Activated CD8-positive, alpha-beta memory T cell treated with anti-CD3 and anti-CD28 coated beads, Interleukin-2, amount 10 ng/mL, durations not matched to agents 7 days and 5 days (primary cell): ENCODE measurements at regions of chr1 and their contacts with region 1.

Region 1: DNA sequence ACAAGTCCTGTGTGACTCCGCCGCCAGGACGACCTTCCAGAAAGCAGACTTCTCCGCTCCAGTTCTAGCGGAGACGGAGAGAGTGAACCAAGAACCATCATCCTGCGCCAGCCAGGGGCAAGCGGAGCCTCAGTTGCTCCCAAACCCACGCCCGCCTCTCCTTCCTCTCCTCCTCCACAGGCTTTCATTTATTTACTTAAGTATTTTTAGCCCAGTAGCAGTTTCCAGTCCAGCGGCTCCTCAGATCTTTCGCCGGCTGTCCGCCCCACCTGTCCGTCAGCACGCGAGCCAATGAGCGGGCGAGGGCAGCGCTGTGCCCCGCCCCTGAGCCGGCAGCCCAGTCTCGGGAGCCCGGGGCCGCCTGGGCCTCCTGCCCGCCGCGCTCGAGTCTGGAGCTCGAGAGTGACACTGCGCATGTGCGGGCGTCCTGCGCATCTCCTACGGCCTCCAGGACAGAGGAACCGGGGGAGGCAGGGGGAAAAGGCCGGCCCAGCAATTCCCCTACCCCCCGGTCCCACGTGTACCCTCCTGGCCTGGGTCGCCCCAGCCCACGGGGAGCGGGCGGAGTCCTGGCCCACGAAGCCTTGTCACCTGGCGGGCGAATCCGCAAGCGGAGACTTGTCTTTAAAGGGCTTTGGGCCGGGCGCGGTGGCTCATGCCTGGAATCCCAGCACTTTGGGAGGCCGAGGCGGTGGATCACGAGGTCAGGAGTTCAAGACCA is at the start of gene FALEC:
- DNase-seq: peak; percentile 94
- ATAC-seq: peak; percentile 100
- H3K4me3 Mint-ChIP-seq: peak within 1 kb of the TSS; percentile 84
- H3K27ac Mint-ChIP-seq: peak within 1 kb of the TSS; percentile 64
- H3K4me1 Mint-ChIP-seq: peaks cover 17% of the 10 kb centered on the region
- H3K27me3 Mint-ChIP-seq: no peaks in the 10 kb centered on the region
- total RNA-seq, gene FALEC: 0.59 TPM in 1 of 2 experiments, not detected in the other

Region 2: GRCh38 chr1:150141452-150141851 is 374.0 kb before region 1 on chr1:
- CTCF ChIA-PET with region 1: no interaction called
- DNase-seq: no peak
- ATAC-seq: no peak
- H3K4me3 Mint-ChIP-seq: no peak overlapping the region
- H3K27ac Mint-ChIP-seq: no peak overlapping the region
- H3K4me1 Mint-ChIP-seq: peaks cover 11% of the 10 kb centered on the region
- H3K27me3 Mint-ChIP-seq: no peaks in the 10 kb centered on the region

Region 3: DNA sequence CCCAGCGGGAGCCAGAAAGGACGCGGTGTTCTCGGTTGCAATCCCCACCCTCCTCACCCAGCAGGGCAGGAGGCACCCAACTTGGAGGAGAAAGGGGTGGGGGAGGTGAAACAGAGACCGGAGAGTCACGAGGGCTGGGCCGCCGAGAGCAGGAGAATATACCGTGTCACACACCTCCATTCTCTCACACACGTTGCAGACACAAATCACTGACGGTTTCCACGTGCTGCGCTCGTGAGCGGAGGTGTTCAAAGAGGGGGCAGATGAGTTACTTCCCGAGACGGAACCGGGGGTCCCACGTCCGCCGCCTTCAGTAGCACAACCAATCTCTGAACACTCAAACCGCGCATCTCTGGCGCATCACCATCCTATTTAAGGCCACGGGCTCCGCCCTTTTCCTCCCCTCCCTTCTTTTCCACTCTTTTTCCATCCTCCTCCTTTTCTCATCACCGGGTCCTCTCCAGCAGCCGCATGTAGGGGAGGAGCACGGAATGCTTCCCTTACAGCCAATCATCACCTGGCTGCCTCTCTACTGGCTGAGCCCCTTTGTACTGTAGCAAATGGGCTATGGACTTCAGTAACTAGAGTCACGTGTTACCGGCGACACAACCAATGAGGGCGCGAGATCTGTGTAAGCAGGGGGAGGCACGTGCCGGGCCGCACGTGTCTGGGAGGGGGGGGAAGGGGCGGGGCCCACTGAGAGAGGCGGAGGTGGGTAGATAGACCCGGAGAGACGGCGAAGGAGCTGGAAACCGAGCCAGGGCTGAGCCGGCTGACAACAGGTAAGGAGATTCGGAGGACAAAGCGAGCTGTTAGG is 233.4 kb before region 1 on chr1 and contains the start of gene CIART:
- CTCF ChIA-PET with region 1: no interaction called
- DNase-seq: peak; percentile 88
- ATAC-seq: peak; percentile 95
- H3K4me3 Mint-ChIP-seq: peak within 1 kb of the TSS; percentile 81
- H3K27ac Mint-ChIP-seq: peak within 1 kb of the TSS; percentile 71
- H3K4me1 Mint-ChIP-seq: peaks cover 23% of the 10 kb centered on the region
- H3K27me3 Mint-ChIP-seq: peaks cover 7% of the 10 kb centered on the region
- total RNA-seq, gene CIART: 0.44 to 1.7 TPM

Region 4: GRCh38 chr1:150464422-150464826 is 51.1 kb before region 1 on chr1:
- CTCF ChIA-PET with region 1: interaction called, 10 read pairs
- DNase-seq: peak; percentile 74
- ATAC-seq: peak; percentile 76
- H3K4me3 Mint-ChIP-seq: no peak overlapping the region
- H3K27ac Mint-ChIP-seq: no peak overlapping the region
- H3K4me1 Mint-ChIP-seq: peaks cover 4% of the 10 kb centered on the region
- H3K27me3 Mint-ChIP-seq: no peaks in the 10 kb centered on the region

Region 5: GRCh38 chr1:150486964-150487762 is 28.3 kb before region 1 on chr1 and contains the start of gene TARS2:
- CTCF ChIA-PET with region 1: interaction called, 19 read pairs
- DNase-seq: peak; percentile 98
- ATAC-seq: peak; percentile 100
- H3K4me3 Mint-ChIP-seq: peak within 1 kb of the TSS; percentile 90
- H3K27ac Mint-ChIP-seq: peak within 1 kb of the TSS; percentile 99
- H3K4me1 Mint-ChIP-seq: peaks cover 22% of the 10 kb centered on the region
- H3K27me3 Mint-ChIP-seq: no peaks in the 10 kb centered on the region
- total RNA-seq, gene TARS2: 51.0 to 51.8 TPM

Region 6: DNA sequence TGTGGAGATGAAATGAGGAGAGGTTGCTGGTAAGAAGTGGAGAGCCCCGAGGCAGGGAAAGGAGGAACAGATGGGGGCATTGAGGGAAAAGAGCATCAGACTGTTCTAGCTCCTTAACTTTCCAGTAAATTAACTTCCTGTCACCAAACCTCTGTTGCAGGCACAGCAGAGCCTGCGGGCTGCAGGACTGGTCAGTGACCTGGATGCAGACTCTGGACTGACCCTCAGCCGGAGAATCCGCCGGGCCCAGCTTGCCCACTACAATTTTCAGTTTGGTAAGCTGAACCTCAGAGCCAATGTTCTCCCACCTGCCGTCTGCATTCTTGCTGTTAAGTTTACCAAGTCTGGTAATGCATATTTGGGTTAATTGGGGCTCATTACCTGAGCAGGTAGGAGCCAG is 10.1 kb before region 1 on chr1:
- CTCF ChIA-PET with region 1: interaction called, 11 read pairs
- DNase-seq: no peak
- ATAC-seq: no peak
- H3K4me3 Mint-ChIP-seq: no peak overlapping the region
- H3K27ac Mint-ChIP-seq: no peak overlapping the region
- H3K4me1 Mint-ChIP-seq: no peaks in the 10 kb centered on the region
- H3K27me3 Mint-ChIP-seq: no peaks in the 10 kb centered on the region

Region 7: GRCh38 chr1:150529017-150529416 is 13.5 kb after region 1 on chr1:
- CTCF ChIA-PET with region 1: interaction called, 27 read pairs
- DNase-seq: no peak
- ATAC-seq: no peak
- H3K4me3 Mint-ChIP-seq: no peak overlapping the region
- H3K27ac Mint-ChIP-seq: no peak overlapping the region
- H3K4me1 Mint-ChIP-seq: no peaks in the 10 kb centered on the region
- H3K27me3 Mint-ChIP-seq: no peaks in the 10 kb centered on the region

Region 8: GRCh38 chr1:150820710-150821512 is 305.4 kb after region 1 on chr1:
- CTCF ChIA-PET with region 1: no interaction called
- DNase-seq: no peak
- ATAC-seq: peak; percentile 57
- H3K4me3 Mint-ChIP-seq: no peak overlapping the region
- H3K27ac Mint-ChIP-seq: no peak overlapping the region
- H3K4me1 Mint-ChIP-seq: peaks cover 10% of the 10 kb centered on the region
- H3K27me3 Mint-ChIP-seq: no peaks in the 10 kb centered on the region